Mucosa of descending colon (tissue), 3 donors: ENCODE measurements at regions of chr9 and their contacts with region 1.

Region 1: DNA sequence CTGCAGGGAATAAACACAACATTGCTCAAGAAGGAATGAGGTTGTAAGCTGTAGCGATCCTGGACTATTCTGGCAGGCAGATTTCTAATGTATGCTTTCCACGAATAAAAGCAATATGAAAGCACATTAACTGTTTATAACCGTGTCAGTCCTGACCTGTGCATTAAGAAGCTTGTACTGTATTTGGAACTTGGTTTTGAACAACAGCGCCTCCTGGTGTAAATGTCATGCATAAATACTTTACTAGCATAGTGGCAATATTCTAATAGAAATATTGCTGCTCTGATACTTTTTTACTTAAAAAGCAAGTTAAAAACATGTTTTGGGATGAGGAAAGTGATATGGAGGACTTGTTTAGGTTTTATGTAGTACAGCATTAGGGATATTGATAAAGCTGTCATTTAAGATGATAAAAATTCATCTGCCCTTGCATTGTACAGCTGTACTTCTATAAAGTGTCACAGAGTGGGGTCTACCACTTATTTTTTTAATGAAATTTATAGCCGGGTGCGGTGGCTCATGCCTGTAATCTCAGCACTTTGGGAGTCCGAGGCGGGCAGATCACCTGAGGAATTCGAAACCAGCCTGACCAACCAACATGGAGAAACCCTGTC is 70.7 kb upstream of the GNE start:
- DNase-seq: peak in 1 of 3 donors; percentile 86
- ATAC-seq: peak; percentile 84
- H3K4me3 ChIP-seq: no peak overlapping the region
- H3K4me1 ChIP-seq: peaks cover 3% of the 10 kb centered on the region
- CTCF ChIP-seq: peak; percentile 51

Region 2: DNA sequence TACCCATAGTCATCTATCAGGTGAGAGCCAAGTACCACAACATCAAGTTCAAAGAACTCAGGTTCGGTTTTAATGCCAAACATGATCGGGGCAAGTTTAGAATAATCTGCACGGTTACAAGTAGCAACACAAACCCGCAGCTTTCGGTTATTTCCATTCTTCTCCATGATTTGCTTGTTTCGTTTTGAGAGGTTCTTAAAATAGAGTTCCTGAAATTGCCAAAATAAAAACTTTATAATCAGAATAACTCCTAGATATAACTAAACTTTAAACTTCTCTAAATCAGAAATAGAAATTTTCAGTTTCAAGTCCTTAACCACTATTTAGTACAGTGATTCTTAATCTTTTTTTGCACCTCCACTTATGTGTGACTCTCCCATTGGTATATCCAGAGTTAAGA is 79.7 kb before region 1 on chr9:
- intact Hi-C with region 1: loop called in 1 of 2 experiments (anchors 2 kb)
- DNase-seq: no peak
- ATAC-seq: no peak
- H3K4me3 ChIP-seq: no peak overlapping the region
- H3K4me1 ChIP-seq: peaks cover 9% of the 10 kb centered on the region
- CTCF ChIP-seq: no peak

Region 3: DNA sequence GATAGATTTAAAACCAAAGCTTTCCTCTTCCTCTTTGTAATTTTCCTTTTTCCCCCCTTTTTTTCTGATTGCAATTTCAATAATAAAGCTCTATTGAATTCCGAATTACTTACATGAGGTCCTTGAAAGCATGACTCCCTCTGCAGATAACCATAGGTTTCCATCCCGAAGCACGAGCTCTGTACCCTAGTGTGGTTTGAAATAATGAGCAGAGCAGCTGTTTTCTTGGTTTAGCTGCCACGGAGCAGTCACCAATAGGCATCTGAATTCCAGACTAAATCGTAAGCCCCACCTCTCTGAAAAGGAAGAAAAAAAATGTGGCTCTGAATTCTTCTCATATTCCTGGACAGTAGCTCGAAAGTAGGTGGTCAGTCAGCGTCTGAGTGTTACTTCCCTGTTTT is 52.1 kb before region 1 on chr9:
- intact Hi-C with region 1: loop called in 1 of 2 experiments (anchors 10 kb)
- DNase-seq: peak in 1 of 3 donors; percentile 64
- ATAC-seq: peak; percentile 82
- H3K4me3 ChIP-seq: no peak overlapping the region
- H3K4me1 ChIP-seq: peaks cover 2% of the 10 kb centered on the region
- CTCF ChIP-seq: no peak